Activated CD4-positive, alpha-beta T cell treated with anti-CD3 and anti-CD28 coated beads for 36 hours (primary cell): ENCODE measurements at regions of chr2 and their contacts with region 1.

Region 1: GRCh38 chr2:38653715-38654527 is 12.0 kb upstream of the GALM start:
- DNase-seq: peak; percentile 87
- ATAC-seq: peak; percentile 81
- H3K4me3 Mint-ChIP-seq: peak overlapping the region; percentile 44
- H3K27ac Mint-ChIP-seq: peak overlapping the region; percentile 98
- H3K4me1 Mint-ChIP-seq: peaks cover 58% of the 10 kb centered on the region
- H3K27me3 Mint-ChIP-seq: no peaks in the 10 kb centered on the region

Region 2: GRCh38 chr2:37916512-37917082 is 737.3 kb before region 1 on chr2:
- CTCF ChIA-PET with region 1: no interaction called
- POLR2A ChIA-PET with region 1: no interaction called
- intact Hi-C with region 1: no loop called
- DNase-seq: no peak
- ATAC-seq: no peak
- H3K4me3 Mint-ChIP-seq: no peak overlapping the region
- H3K27ac Mint-ChIP-seq: no peak overlapping the region
- H3K4me1 Mint-ChIP-seq: no peaks in the 10 kb centered on the region
- H3K27me3 Mint-ChIP-seq: peaks cover 4% of the 10 kb centered on the region

Region 3: GRCh38 chr2:38610851-38611801 is 42.8 kb before region 1 on chr2:
- CTCF ChIA-PET with region 1: interaction called, 51 read pairs
- POLR2A ChIA-PET with region 1: no interaction called
- intact Hi-C with region 1: loop called (anchors 1 kb)
- DNase-seq: peak; percentile 46
- ATAC-seq: peak; percentile 75
- H3K4me3 Mint-ChIP-seq: no peak overlapping the region
- H3K27ac Mint-ChIP-seq: no peak overlapping the region
- H3K4me1 Mint-ChIP-seq: peaks cover 66% of the 10 kb centered on the region
- H3K27me3 Mint-ChIP-seq: peaks cover 2% of the 10 kb centered on the region

Region 4: DNA sequence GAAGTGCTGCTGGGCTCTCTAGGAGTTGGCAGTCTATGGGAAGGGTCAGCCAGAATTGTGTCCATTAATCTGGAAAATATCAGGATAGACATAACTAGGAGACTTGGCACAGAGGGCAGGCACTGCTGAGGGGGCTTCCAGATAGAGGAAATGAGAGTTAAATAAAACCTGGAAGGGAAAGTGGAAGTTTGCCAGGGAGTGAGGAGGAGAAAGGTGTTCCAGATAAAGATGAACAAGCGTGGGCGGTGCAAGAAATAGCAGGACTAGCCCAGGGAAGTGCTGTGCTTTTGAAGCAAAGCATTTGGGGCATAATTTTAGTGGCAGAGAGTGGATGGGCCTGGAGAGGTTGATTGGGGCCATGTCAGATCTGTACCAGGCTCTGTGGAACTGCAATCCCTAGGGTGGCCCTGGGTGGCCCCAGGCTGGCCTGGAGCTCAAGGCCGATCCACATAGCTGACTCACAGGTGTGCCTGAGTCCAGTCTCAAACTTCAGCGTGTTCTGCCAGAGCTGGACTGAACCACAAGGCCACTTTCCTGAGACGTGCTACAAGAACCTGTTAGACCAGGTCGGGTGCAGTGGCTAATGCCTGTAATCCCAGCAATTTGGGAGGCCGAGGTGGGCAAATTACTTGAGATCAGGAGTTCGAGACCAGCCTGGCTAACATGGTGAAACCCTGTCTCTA is 38.9 kb after region 1 on chr2:
- CTCF ChIA-PET with region 1: no interaction called
- POLR2A ChIA-PET with region 1: no interaction called
- intact Hi-C with region 1: loop called in 1 of 2 experiments (anchors 1 kb)
- DNase-seq: no peak
- ATAC-seq: no peak
- H3K4me3 Mint-ChIP-seq: no peak overlapping the region
- H3K27ac Mint-ChIP-seq: peak overlapping the region; percentile 71
- H3K4me1 Mint-ChIP-seq: peaks cover 67% of the 10 kb centered on the region
- H3K27me3 Mint-ChIP-seq: no peaks in the 10 kb centered on the region

Region 5: DNA sequence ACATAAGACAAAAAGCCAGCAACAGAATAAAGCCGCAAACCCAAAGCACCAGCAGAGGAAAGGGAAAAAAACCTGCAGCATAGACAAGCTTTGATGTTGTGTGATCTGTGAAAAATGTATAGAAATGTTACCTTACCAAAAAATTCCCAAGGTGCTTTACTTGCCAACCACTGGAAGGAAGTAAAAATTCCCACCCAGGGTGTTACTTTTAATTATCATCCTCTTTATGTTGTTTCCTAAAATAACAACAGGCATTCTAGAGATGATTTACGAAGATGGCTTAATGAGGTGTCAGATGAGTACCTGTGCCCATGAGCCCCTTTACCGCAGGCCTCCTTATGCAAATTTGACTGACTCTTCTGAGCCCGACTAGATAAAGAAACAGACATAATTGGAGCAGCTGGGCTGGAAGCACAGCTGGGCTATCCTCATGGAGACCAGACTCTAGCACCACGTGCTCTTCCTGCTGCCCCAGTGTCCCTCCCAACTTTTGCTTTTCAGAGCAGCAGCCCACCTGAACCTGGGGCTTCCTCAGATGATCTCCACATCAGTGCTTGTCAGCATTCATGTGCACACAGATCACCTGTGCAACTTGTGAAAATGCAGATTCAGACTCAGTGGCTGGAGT is 55.8 kb after region 1 on chr2:
- CTCF ChIA-PET with region 1: interaction called, 3 read pairs
- POLR2A ChIA-PET with region 1: interaction called, 5 read pairs
- intact Hi-C with region 1: loop called in 1 of 2 experiments (anchors 1 kb)
- DNase-seq: peak; percentile 70
- ATAC-seq: peak; percentile 75
- H3K4me3 Mint-ChIP-seq: peak overlapping the region; percentile 48
- H3K27ac Mint-ChIP-seq: peak overlapping the region; percentile 88
- H3K4me1 Mint-ChIP-seq: peaks cover 76% of the 10 kb centered on the region
- H3K27me3 Mint-ChIP-seq: no peaks in the 10 kb centered on the region